ENCODE measurements at regions of chr1 and their contacts with region 1.

Region 1: GRCh38 chr1:93140106-93140505 is 40.1 kb downstream of the TMED5 start:
- DNase-seq: no peak
- H3K4me3 ChIP-seq: no peak overlapping the region
- H3K27ac ChIP-seq: no peak overlapping the region
- H3K4me1 ChIP-seq: no peaks in the 10 kb centered on the region
- CTCF ChIP-seq: no peak

Region 2: DNA sequence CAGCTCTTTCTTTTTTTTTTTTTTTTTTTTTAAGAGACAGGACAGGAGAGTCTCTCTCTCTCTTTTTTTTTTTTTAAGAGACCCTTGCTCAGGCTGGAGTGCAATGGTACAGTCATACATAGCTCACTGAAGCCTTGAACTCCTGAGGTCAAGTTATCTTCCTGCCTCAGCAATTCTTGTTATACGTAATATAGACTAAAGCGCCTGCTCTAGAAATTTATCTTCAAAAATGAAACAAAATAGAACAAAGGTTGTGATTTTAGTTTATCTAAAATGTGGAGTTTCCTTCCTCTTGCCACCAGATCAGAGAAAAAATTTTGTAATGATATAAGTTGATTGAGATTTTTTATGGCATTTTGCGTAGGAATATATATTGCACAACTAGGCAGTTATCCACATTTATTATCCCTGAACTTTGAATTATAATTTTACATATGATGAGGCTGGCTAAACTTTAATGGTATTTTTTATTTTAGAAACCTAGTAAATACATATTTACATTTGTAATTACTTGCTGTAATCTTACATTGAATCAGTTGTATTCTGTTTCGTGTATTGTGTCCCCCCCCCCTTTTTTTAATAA is 16.8 kb before region 1 on chr1:
- CTCF ChIA-PET with region 1: no interaction called
- POLR2A ChIA-PET with region 1: interaction called, 11 read pairs
- intact Hi-C with region 1: no loop called
- DNase-seq: no peak
- H3K4me3 ChIP-seq: no peak overlapping the region
- H3K27ac ChIP-seq: no peak overlapping the region
- H3K4me1 ChIP-seq: no peaks in the 10 kb centered on the region
- CTCF ChIP-seq: no peak

Measured in OCI-LY7 (cell line).